Panc1 (cell line): ENCODE measurements at regions of chr4 and their contacts with region 1.

Region 1: GRCh38 chr4:88456757-88457306 is at the start of gene HERC5:
- DNase-seq: peak; percentile 80
- ATAC-seq: peak; percentile 97
- H3K4me3 ChIP-seq: peak within 1 kb of the TSS; percentile 53 to 57
- H3K27ac ChIP-seq: no peak within 1 kb of the TSS
- H3K4me1 ChIP-seq: no peaks in the 10 kb centered on the region
- H3K27me3 ChIP-seq: peaks cover 7% of the 10 kb centered on the region; the same call in 1 of the 2 replicates
- CTCF ChIP-seq: peak; percentile 81
- total RNA-seq, gene HERC5: 6.7 TPM

Region 2: GRCh38 chr4:88217920-88218319 is 238.9 kb before region 1 on chr4:
- CTCF ChIA-PET with region 1: interaction called, 4 read pairs
- POLR2A ChIA-PET with region 1: no interaction called
- in situ Hi-C with region 1: no loop called
- intact Hi-C with region 1: loop called (anchors 2 kb)
- DNase-seq: no peak
- ATAC-seq: no peak
- H3K4me3 ChIP-seq: no peak overlapping the region
- H3K27ac ChIP-seq: no peak overlapping the region
- H3K4me1 ChIP-seq: no peaks in the 10 kb centered on the region
- H3K27me3 ChIP-seq: no peaks in the 10 kb centered on the region
- CTCF ChIP-seq: no peak

Region 3: DNA sequence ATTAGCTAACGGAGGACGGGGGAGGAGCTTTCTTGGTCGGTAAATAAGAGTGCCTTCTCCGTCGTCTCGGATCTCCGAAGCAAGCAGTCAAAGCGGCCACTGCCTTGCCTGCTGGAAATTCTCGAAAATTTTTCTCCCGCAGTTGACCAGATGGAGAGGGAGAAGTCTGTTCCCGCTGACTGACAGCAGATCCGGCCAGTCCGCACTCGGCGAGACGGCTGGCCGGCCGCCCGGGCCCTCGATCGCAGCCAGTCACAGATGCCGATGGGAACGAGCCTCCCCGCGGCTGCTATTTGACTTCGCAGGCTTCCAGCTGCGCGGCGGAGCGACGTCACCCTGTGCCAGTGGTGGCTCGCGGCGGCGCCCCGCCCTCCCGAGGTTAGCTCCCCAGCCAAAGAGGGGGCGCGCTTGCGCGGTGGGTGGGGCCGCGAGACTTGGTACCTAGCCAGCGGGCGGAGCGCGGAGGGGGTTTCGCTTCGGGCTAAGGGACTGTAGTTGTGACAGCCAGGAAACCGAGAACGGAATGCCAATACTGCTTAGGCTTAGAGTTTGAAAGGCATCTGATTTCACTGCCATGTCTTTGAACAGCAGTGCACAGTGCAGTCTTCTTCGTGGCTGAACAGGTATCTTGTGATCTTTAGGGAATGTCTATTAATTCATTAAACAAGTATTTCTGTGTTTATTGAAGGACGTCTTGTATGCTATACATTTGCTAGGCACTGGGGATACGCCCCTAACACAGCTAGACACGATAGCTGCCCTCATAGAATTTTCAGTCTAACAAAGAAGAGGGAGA is 172.2 kb before region 1 on chr4 and contains the start of gene PPM1K:
- CTCF ChIA-PET with region 1: no interaction called
- POLR2A ChIA-PET with region 1: no interaction called
- in situ Hi-C with region 1: no loop called
- intact Hi-C with region 1: loop called (anchors 5 kb)
- DNase-seq: peak; percentile 76
- ATAC-seq: peak; percentile 97
- H3K4me3 ChIP-seq: peak within 1 kb of the TSS; percentile 69 to 79
- H3K27ac ChIP-seq: peak within 1 kb of the TSS; percentile 34
- H3K4me1 ChIP-seq: no peaks in the 10 kb centered on the region; the same call in 1 of the 2 replicates
- H3K27me3 ChIP-seq: peaks cover 2% of the 10 kb centered on the region; the same call in 1 of the 2 replicates
- CTCF ChIP-seq: 0 out of 2 replicates have a peak, but pooled peaks have one; percentile 9
- total RNA-seq, gene PPM1K: 2.1 TPM

Region 4: GRCh38 chr4:88378691-88379559 is 77.9 kb before region 1 on chr4 and contains the start of gene HERC6:
- CTCF ChIA-PET with region 1: interaction called, 3 read pairs
- POLR2A ChIA-PET with region 1: no interaction called
- in situ Hi-C with region 1: no loop called
- intact Hi-C with region 1: loop called (anchors 5 kb)
- DNase-seq: peak; percentile 46
- ATAC-seq: peak; percentile 98
- H3K4me3 ChIP-seq: peak within 1 kb of the TSS; percentile 66 to 78
- H3K27ac ChIP-seq: peak within 1 kb of the TSS; percentile 23; the same call in 1 of the 2 replicates
- H3K4me1 ChIP-seq: no peaks in the 10 kb centered on the region
- H3K27me3 ChIP-seq: no peaks in the 10 kb centered on the region
- CTCF ChIP-seq: peak; percentile 81
- total RNA-seq, gene HERC6: 1.2 TPM